ENCODE measurements at regions of chr7 and their contacts with region 1.

Region 1: DNA sequence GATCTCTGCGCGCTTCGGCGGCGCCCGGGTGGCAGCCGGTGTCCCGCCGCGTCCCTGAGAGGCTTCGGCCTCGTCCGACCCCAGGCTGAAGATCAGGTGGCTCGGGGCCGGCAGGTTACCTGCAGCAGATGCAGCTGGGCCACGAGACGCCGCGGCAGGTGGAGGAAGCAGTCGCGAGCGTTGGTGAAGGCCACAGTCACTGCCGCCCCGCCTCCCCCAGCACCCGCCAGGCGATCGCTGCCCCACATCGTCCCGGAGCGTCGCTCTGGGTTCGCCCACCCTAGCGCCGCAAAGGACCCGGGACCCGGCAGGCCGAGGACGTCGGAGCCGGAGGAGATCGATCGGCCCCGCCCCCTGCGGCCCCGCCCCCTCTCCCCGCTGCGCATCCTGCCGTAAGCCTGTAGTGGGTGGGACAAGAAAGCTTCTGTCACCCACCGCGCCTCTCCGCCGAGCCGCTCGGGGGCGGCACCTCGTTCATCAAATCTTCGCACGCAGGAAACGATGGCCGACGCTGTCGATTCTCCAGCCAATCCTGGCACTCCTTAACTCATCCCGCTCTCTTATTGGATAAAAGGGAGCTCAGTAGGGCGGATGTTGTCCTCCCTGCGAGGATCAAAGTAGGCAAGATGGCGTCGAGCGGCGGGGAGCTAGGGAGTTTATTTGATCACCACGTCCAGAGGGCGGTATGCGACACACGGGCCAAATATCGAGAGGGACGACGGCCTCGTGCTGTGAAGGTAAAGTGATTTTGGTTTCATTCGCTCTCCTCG is at the starts of genes PEX1 and RBM48:
- DNase-seq: peak; percentile 93 to 98 (median 98)
- H3K4me3 ChIP-seq: peak within 1 kb of the TSS; percentile 92 to 97
- H3K4me3 Mint-ChIP-seq: peak within 1 kb of the TSS; percentile 93 to 99 (median 96)
- H3K27ac ChIP-seq: peak within 1 kb of the TSS; percentile 91
- H3K27ac Mint-ChIP-seq: peak within 1 kb of the TSS; percentile 87 to 100 (median 98)
- H3K4me1 ChIP-seq: peaks cover 33% of the 10 kb centered on the region
- H3K4me1 Mint-ChIP-seq: peaks cover 31 to 52% (median 38%) of the 10 kb centered on the region in 4 donors
- H3K27me3 ChIP-seq: no peaks in the 10 kb centered on the region
- H3K27me3 Mint-ChIP-seq: no peaks in the 10 kb centered on the region
- total RNA-seq, gene PEX1: 35.4 to 38.0 TPM
- total RNA-seq, gene RBM48: 37.5 to 37.9 TPM

Region 2: GRCh38 chr7:91880413-91881241 is 647.7 kb before region 1 on chr7 and contains the start of gene MTERF1:
- CTCF ChIA-PET with region 1: interaction called, 5 read pairs
- POLR2A ChIA-PET with region 1: interaction called, 3 read pairs
- intact Hi-C with region 1: loop called (anchors 2 kb)
- DNase-seq: peak; percentile 89 to 91 (median 90)
- H3K4me3 ChIP-seq: peak within 1 kb of the TSS; percentile 77 to 86
- H3K4me3 Mint-ChIP-seq: peak within 1 kb of the TSS; percentile 92 to 100 (median 98)
- H3K27ac ChIP-seq: peak within 1 kb of the TSS; percentile 71
- H3K27ac Mint-ChIP-seq: peak within 1 kb of the TSS; percentile 88 to 98 (median 95)
- H3K4me1 ChIP-seq: peaks cover 26% of the 10 kb centered on the region
- H3K4me1 Mint-ChIP-seq: peaks cover 30 to 46% (median 35%) of the 10 kb centered on the region in 4 donors
- H3K27me3 ChIP-seq: no peaks in the 10 kb centered on the region
- H3K27me3 Mint-ChIP-seq: no peaks in the 10 kb centered on the region
- total RNA-seq, gene MTERF1: 29.9 to 32.4 TPM

Region 3: DNA sequence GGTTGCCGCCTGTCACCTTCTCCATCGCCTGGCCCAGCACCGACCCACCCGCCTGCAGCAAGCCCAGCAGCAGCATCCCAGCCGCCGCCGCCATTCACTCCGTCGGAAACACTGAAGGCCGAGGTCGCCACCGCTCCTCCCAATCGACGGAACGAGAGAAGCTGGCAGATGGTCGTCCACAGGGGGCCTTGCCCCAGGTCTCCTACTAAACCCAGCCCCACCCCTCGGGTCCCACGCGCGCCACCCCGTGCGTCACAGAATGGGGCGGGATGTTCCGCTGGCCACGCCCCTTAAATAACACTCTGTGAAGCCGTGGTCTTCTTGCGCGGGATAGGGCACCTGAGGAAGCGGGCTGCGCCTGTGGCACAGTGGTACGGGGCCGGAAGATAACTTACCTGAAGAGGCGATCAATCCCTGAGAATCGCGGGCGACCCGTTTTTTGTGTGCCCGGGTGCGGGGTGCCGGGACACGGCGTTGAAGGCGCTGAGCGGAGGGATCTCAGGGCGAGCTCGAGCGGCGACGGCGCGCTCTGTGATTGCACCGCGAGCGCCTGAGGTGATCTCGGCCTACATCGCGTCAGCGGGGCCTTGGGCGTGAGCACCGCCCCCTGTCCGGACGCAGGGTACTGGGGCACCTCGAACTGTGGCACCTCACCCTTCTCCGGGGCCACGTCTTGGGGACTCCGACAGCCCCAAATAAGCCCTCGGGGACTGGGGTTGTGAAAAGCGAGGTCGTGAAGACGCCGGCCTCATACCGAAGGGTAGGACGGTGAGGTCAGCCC is 393.9 kb before region 1 on chr7 and contains the start of gene CYP51A1:
- CTCF ChIA-PET with region 1: no interaction called
- POLR2A ChIA-PET with region 1: interaction called, 4 read pairs
- intact Hi-C with region 1: loop called (anchors 1 kb)
- DNase-seq: peak; percentile 94 to 97 (median 95)
- H3K4me3 ChIP-seq: peak within 1 kb of the TSS; percentile 45 to 92
- H3K4me3 Mint-ChIP-seq: peak within 1 kb of the TSS; percentile 96 to 100 (median 99)
- H3K27ac ChIP-seq: peak within 1 kb of the TSS; percentile 77
- H3K27ac Mint-ChIP-seq: peak within 1 kb of the TSS; percentile 97 to 100 (median 100)
- H3K4me1 ChIP-seq: peaks cover 19% of the 10 kb centered on the region
- H3K4me1 Mint-ChIP-seq: peaks cover 18 to 36% (median 26%) of the 10 kb centered on the region in 4 donors
- H3K27me3 ChIP-seq: no peaks in the 10 kb centered on the region
- H3K27me3 Mint-ChIP-seq: no peaks in the 10 kb centered on the region
- total RNA-seq, gene CYP51A1: 14.3 to 15.2 TPM

Region 4: GRCh38 chr7:92391071-92391470 is 137.3 kb before region 1 on chr7:
- CTCF ChIA-PET with region 1: no interaction called
- POLR2A ChIA-PET with region 1: no interaction called
- intact Hi-C with region 1: no loop called
- DNase-seq: no peak
- H3K4me3 ChIP-seq: no peak overlapping the region
- H3K4me3 Mint-ChIP-seq: no peak overlapping the region
- H3K27ac ChIP-seq: no peak overlapping the region
- H3K27ac Mint-ChIP-seq: peak overlapping the region in 1 of 7 donors; percentile 21
- H3K4me1 ChIP-seq: no peaks in the 10 kb centered on the region
- H3K4me1 Mint-ChIP-seq: no peaks in the 10 kb centered on the region
- H3K27me3 ChIP-seq: no peaks in the 10 kb centered on the region
- H3K27me3 Mint-ChIP-seq: no peaks in the 10 kb centered on the region

Region 5: GRCh38 chr7:92421676-92422435 is 106.5 kb before region 1 on chr7:
- CTCF ChIA-PET with region 1: no interaction called
- POLR2A ChIA-PET with region 1: interaction called, 4 read pairs
- intact Hi-C with region 1: loop called (anchors 1 kb)
- DNase-seq: no peak
- H3K4me3 ChIP-seq: no peak overlapping the region
- H3K4me3 Mint-ChIP-seq: no peak overlapping the region
- H3K27ac ChIP-seq: no peak overlapping the region
- H3K27ac Mint-ChIP-seq: no peak overlapping the region
- H3K4me1 ChIP-seq: peaks cover 12% of the 10 kb centered on the region
- H3K4me1 Mint-ChIP-seq: peaks cover 9 to 11% (median 9%) of the 10 kb centered on the region in 4 donors
- H3K27me3 ChIP-seq: no peaks in the 10 kb centered on the region
- H3K27me3 Mint-ChIP-seq: peaks cover 13 to 14% of the 10 kb centered on the region in 2 donors

Region 6: DNA sequence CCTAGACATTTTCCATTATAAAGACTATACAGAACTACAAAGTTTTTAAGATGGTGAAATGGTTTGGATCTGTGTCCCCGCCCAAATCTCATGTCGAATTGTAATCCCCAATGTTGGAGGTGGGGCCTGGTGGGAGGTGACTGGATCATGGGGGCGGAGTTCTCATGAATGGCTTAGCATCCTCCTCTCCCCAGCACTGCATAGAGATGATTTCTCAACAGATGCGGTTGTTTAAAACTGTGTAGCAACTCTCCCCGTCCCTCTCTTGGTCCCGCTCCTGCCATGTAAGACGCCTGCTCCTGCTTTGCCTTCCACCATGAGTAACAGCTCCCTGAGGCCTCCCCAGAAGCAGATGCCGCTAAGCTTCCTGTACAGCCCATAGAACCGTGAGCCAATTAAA is 60.2 kb after region 1 on chr7:
- CTCF ChIA-PET with region 1: interaction called, 8 read pairs
- POLR2A ChIA-PET with region 1: interaction called, 20 read pairs
- intact Hi-C with region 1: loop called (anchors 1 kb)
- DNase-seq: peak in 1 of 5 donors; percentile 4
- H3K4me3 ChIP-seq: peak overlapping the region; percentile 82 to 98
- H3K4me3 Mint-ChIP-seq: peak overlapping the region; percentile 87 to 98 (median 96)
- H3K27ac ChIP-seq: peak overlapping the region; percentile 91
- H3K27ac Mint-ChIP-seq: peak overlapping the region; percentile 19 to 97 (median 80)
- H3K4me1 ChIP-seq: peaks cover 58% of the 10 kb centered on the region
- H3K4me1 Mint-ChIP-seq: peaks cover 41 to 72% (median 52%) of the 10 kb centered on the region in 4 donors
- H3K27me3 ChIP-seq: no peaks in the 10 kb centered on the region
- H3K27me3 Mint-ChIP-seq: no peaks in the 10 kb centered on the region

Region 7: GRCh38 chr7:93055543-93056107 is 527.3 kb after region 1 on chr7:
- CTCF ChIA-PET with region 1: interaction called, 7 read pairs
- POLR2A ChIA-PET with region 1: no interaction called
- intact Hi-C with region 1: loop called (anchors 2 kb)
- DNase-seq: peak in 4 of 5 donors; percentile 37 to 48 (median 46)
- H3K4me3 ChIP-seq: no peak overlapping the region
- H3K4me3 Mint-ChIP-seq: no peak overlapping the region
- H3K27ac ChIP-seq: no peak overlapping the region
- H3K27ac Mint-ChIP-seq: no peak overlapping the region
- H3K4me1 ChIP-seq: no peaks in the 10 kb centered on the region
- H3K4me1 Mint-ChIP-seq: peaks cover 0 to 2% (median 0%) of the 10 kb centered on the region in 4 donors
- H3K27me3 ChIP-seq: no peaks in the 10 kb centered on the region
- H3K27me3 Mint-ChIP-seq: peaks cover 0 to 4% of the 10 kb centered on the region in 2 donors

Measured in CD4-positive, alpha-beta memory T cell (primary cell).